HCT116 (cell line): ENCODE measurements at regions of chr3 and their contacts with region 1.

Region 1: DNA sequence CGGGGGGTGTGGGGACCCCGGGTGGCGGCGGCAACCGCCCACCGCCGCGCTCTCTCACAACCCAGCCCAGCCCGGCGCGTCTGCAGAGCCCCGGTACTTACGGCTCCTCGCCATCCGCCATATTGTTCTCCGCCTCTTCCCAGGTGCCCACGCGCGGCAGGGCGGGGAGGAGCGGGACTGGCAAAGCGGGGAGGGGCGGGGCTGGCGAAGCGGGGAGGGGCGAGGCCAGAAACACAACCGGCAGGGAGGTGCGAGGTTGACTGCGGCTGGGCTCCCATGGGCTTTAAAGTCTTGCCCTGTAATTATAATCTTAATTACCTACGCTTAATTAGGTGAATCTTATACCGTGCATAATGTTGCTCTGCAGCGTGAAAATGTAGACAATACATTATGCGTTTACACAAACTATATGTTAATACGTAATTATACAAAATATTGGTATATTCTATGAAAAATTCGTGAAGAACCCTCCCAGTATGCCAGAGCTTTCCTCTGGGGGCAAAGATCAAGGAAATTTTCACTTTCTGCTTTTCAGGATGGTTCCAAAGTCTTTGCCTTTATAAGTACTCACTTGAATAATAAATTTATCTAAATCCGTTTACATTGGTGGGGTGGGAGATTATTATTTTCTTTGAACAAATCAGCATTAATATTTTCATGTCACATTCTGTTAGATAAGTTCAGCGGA is at the start of gene UBA3:
- DNase-seq: peak; percentile 56
- ATAC-seq: peak; percentile 85
- H3K4me3 ChIP-seq: peak within 1 kb of the TSS; percentile 67 to 78
- H3K27ac ChIP-seq: peak within 1 kb of the TSS; percentile 60; the same call in 1 of the 2 replicates
- H3K4me1 ChIP-seq: peaks cover 22 to 45% of the 10 kb centered on the region in 2 experiments
- H3K27me3 ChIP-seq: no peaks in the 10 kb centered on the region
- CTCF ChIP-seq: no peak
- POLR2A ChIP-seq: no peak
- RAD21 ChIP-seq: no peak
- total RNA-seq, gene UBA3: 45.6 TPM

Region 2: DNA sequence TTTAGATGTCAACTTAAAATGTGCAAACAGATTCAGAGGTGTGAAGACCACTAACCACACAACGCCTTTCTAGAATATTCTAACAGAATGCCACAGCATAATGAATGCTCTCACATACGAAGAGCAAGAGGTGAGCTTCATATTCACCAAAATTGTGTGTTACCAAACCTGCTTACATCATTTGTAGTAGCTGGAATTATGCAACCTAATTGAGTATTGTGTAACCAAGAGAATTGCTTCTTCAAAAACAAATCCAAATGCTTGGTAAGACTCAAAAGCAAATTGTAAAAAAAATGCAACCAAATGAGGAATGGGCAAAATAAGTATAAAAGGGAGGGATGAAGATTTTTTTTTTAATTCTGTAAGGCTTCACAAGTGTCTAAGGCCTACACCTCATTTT is 308.7 kb before region 1 on chr3:
- CTCF ChIA-PET with region 1: no interaction called
- POLR2A ChIA-PET with region 1: no interaction called
- RAD21 ChIA-PET with region 1: no interaction called
- intact Hi-C with region 1: no loop called
- DNase-seq: no peak
- ATAC-seq: no peak
- H3K4me3 ChIP-seq: no peak overlapping the region
- H3K27ac ChIP-seq: no peak overlapping the region
- H3K4me1 ChIP-seq: no peaks in the 10 kb centered on the region
- H3K27me3 ChIP-seq: no peaks in the 10 kb centered on the region
- CTCF ChIP-seq: no peak
- POLR2A ChIP-seq: no peak
- RAD21 ChIP-seq: no peak

Region 3: GRCh38 chr3:68793759-68794701 is 286.3 kb before region 1 on chr3:
- CTCF ChIA-PET with region 1: no interaction called
- POLR2A ChIA-PET with region 1: no interaction called
- RAD21 ChIA-PET with region 1: no interaction called
- intact Hi-C with region 1: no loop called
- DNase-seq: no peak
- ATAC-seq: no peak
- H3K4me3 ChIP-seq: no peak overlapping the region
- H3K27ac ChIP-seq: no peak overlapping the region
- H3K4me1 ChIP-seq: no peaks in the 10 kb centered on the region
- H3K27me3 ChIP-seq: no peaks in the 10 kb centered on the region
- CTCF ChIP-seq: no peak
- POLR2A ChIP-seq: no peak
- RAD21 ChIP-seq: no peak

Region 4: DNA sequence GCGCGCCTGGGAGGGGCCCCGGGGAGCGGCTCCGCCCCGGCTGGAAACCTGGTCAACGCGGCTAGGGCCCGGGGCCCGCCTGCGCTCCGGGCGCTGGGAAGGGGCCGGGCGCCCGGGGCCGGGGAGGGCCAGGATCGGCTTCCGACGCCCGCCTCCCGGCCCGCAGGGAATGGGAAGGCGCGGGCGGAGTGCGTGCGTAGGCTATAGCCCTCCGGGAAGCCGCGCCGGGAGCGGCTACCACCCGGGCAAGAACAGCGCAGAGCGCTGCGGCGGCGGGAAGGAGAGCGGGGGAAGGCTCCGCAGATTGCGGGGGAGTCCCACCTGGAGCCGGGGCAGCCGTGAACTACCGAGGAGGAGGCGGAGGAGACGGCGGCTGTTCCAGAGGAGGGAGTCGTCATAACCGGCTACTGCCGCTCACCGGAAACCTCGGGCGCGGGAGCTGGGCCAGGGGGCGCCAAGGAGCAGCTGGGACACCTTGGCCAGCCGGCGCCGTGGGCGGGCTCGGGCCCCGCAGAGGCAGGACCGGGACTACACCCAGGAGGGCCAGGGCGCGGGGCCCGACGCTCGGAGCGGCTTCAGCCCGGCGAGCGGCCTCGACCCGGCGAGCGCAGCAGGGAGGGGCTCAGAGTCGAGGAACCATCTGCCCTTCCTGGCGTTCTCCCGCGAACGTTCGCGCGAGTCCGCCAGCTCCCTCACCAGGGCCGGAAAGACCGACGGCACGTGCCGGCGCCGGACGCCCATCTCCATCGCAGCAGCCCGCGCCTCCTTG is 66.9 kb before region 1 on chr3 and contains the start of gene EOGT:
- CTCF ChIA-PET with region 1: no interaction called
- POLR2A ChIA-PET with region 1: no interaction called
- RAD21 ChIA-PET with region 1: no interaction called
- intact Hi-C with region 1: loop called (anchors 2 kb)
- DNase-seq: peak; percentile 61
- ATAC-seq: peak; percentile 90
- H3K4me3 ChIP-seq: peak within 1 kb of the TSS; percentile 62 to 69
- H3K27ac ChIP-seq: peak within 1 kb of the TSS; percentile 90
- H3K4me1 ChIP-seq: peaks cover 4 to 18% of the 10 kb centered on the region in 2 experiments
- H3K27me3 ChIP-seq: no peaks in the 10 kb centered on the region
- CTCF ChIP-seq: peak; percentile 33 to 71 (median 54); a peak in 5 of 6 replicates
- POLR2A ChIP-seq: peak; percentile 36
- RAD21 ChIP-seq: 0 out of 2 replicates have a peak, but pooled peaks have one; percentile 21
- total RNA-seq, gene EOGT: 20.1 TPM

Region 5: GRCh38 chr3:69051756-69052471 is 28.5 kb before region 1 on chr3 and contains the start of gene TMF1:
- CTCF ChIA-PET with region 1: no interaction called
- POLR2A ChIA-PET with region 1: interaction called, 5 read pairs
- RAD21 ChIA-PET with region 1: no interaction called
- intact Hi-C with region 1: loop called (anchors 1 kb)
- DNase-seq: peak; percentile 98
- ATAC-seq: peak; percentile 90
- H3K4me3 ChIP-seq: peak within 1 kb of the TSS; percentile 81 to 87
- H3K27ac ChIP-seq: peak within 1 kb of the TSS; percentile 61
- H3K4me1 ChIP-seq: peaks cover 10 to 14% of the 10 kb centered on the region in 2 experiments
- H3K27me3 ChIP-seq: no peaks in the 10 kb centered on the region
- CTCF ChIP-seq: no peak
- POLR2A ChIP-seq: no peak
- RAD21 ChIP-seq: no peak
- total RNA-seq, gene TMF1: 27.3 TPM

Region 6: DNA sequence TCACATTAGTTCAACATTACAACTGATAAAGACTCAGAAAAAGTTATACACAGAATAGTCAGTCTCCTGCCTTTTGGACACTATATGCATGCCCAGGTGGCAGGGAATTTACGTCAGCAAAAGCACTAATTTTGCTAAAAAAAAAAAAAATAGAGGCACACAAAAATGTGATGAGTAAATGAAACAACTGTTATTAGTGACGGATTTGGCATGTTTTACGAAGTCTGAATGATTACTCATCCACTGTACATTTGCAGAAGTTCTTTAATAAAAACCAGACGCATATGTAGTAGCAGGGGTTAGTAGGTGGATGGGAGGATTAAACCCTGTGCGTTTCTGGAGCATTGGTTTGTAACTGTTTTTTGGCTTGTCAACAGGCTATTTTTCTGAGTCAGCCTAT is 757.8 kb after region 1 on chr3:
- CTCF ChIA-PET with region 1: no interaction called
- POLR2A ChIA-PET with region 1: no interaction called
- RAD21 ChIA-PET with region 1: no interaction called
- intact Hi-C with region 1: no loop called
- DNase-seq: no peak
- ATAC-seq: no peak
- H3K4me3 ChIP-seq: no peak overlapping the region
- H3K27ac ChIP-seq: no peak overlapping the region
- H3K4me1 ChIP-seq: no peaks in the 10 kb centered on the region
- H3K27me3 ChIP-seq: no peaks in the 10 kb centered on the region
- CTCF ChIP-seq: no peak
- POLR2A ChIP-seq: no peak
- RAD21 ChIP-seq: no peak